ENCODE measurements at regions of chr2 and their contacts with region 1.

Region 1: GRCh38 chr2:124804014-124804940 is 779.2 kb downstream of the CNTNAP5 start:
- DNase-seq: peak in 1 of 2 experiments; percentile 1
- H3K4me3 ChIP-seq: no peak overlapping the region
- H3K27ac ChIP-seq: no peak overlapping the region
- H3K4me1 ChIP-seq: no peaks in the 10 kb centered on the region
- H3K27me3 ChIP-seq: no peaks in the 10 kb centered on the region
- CTCF ChIP-seq: peak; percentile 90

Region 2: GRCh38 chr2:125471963-125472362 is 667.7 kb after region 1 on chr2:
- CTCF ChIA-PET with region 1: no interaction called
- POLR2A ChIA-PET with region 1: no interaction called
- intact Hi-C with region 1: loop called (anchors 10 kb)
- DNase-seq: peak in 1 of 2 experiments; percentile 22
- H3K4me3 ChIP-seq: no peak overlapping the region
- H3K27ac ChIP-seq: no peak overlapping the region
- H3K4me1 ChIP-seq: no peaks in the 10 kb centered on the region
- H3K27me3 ChIP-seq: no peaks in the 10 kb centered on the region
- CTCF ChIP-seq: peak; percentile 62

Measured in PC-9 (cell line).